Activated B cell treated with CpG ODN at 0.5 μM for 24 hours (primary cell): ENCODE measurements at regions of chr1 and their contacts with region 1.

Region 1: DNA sequence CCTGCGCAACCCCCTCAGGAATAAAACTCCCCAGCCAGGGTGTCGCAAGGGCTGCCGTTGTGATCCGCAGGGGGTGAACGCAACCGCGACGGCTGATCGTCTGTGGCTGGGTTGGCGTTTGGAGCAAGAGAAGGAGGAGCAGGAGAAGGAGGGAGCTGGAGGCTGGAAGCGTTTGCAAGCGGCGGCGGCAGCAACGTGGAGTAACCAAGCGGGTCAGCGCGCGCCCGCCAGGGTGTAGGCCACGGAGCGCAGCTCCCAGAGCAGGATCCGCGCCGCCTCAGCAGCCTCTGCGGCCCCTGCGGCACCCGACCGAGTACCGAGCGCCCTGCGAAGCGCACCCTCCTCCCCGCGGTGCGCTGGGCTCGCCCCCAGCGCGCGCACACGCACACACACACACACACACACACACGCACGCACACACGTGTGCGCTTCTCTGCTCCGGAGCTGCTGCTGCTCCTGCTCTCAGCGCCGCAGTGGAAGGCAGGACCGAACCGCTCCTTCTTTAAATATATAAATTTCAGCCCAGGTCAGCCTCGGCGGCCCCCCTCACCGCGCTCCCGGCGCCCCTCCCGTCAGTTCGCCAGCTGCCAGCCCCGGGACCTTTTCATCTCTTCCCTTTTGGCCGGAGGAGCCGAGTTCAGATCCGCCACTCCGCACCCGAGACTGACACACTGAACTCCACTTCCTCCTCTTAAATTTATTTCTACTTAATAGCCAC is 696 bp downstream of the TGFB2 start:
- DNase-seq: peak; percentile 50
- ATAC-seq: peak; percentile 76
- H3K4me3 Mint-ChIP-seq: no peak overlapping the region
- H3K27ac Mint-ChIP-seq: no peak overlapping the region
- H3K4me1 Mint-ChIP-seq: peaks cover 46% of the 10 kb centered on the region
- H3K27me3 Mint-ChIP-seq: no peaks in the 10 kb centered on the region
- CTCF ChIP-seq: no peak

Region 2: DNA sequence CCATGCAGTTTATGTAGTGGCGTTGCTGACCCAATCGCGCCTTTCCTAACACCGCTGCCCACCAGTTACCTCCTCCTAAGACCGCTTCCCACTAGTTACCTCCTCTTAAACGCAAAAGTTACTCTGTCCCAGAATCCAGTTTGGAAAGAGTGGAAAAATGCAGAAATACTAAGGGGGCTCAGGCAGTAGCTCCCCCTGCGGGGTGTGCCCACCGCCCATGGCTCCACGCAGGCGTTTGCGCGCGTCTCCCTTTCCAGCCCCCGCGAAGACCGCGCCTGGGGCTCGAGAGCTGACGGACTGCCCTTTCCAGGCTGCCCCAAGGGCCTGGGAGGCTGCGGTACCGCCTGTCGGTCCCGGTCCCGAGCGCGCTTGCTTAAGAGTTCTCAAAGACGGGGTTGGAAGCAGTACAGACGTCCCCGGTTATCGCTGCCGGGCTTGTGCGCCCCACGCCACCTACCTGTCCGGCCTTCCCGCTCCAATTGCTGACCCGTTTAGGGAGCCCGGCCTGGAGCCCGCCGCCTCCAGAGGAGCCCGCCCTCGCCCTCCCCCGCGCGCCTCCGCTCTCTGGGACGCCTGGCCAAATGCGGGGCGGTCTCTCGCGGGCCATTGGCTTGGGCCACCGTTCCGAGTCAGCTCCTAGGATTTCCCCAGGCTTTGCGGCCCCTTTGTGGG is 1208.5 kb before region 1 on chr1:
- CTCF ChIA-PET with region 1: no interaction called
- POLR2A ChIA-PET with region 1: no interaction called
- intact Hi-C with region 1: no loop called
- DNase-seq: no peak
- ATAC-seq: no peak
- H3K4me3 Mint-ChIP-seq: no peak overlapping the region
- H3K27ac Mint-ChIP-seq: no peak overlapping the region
- H3K4me1 Mint-ChIP-seq: peaks cover 2% of the 10 kb centered on the region
- H3K27me3 Mint-ChIP-seq: peaks cover 59% of the 10 kb centered on the region
- CTCF ChIP-seq: no peak

Region 3: GRCh38 chr1:218284934-218285635 is 60.7 kb before region 1 on chr1 and contains the start of gene RRP15:
- CTCF ChIA-PET with region 1: no interaction called
- POLR2A ChIA-PET with region 1: interaction called, 5 read pairs
- intact Hi-C with region 1: loop called (anchors 2 kb)
- DNase-seq: peak; percentile 85
- ATAC-seq: peak; percentile 99
- H3K4me3 Mint-ChIP-seq: peak within 1 kb of the TSS; percentile 96
- H3K27ac Mint-ChIP-seq: peak within 1 kb of the TSS; percentile 97
- H3K4me1 Mint-ChIP-seq: peaks cover 30% of the 10 kb centered on the region
- H3K27me3 Mint-ChIP-seq: peaks cover 9% of the 10 kb centered on the region
- CTCF ChIP-seq: no peak
- total RNA-seq, gene RRP15: 26.9 and 27.3 TPM in 2 replicates

Region 4: DNA sequence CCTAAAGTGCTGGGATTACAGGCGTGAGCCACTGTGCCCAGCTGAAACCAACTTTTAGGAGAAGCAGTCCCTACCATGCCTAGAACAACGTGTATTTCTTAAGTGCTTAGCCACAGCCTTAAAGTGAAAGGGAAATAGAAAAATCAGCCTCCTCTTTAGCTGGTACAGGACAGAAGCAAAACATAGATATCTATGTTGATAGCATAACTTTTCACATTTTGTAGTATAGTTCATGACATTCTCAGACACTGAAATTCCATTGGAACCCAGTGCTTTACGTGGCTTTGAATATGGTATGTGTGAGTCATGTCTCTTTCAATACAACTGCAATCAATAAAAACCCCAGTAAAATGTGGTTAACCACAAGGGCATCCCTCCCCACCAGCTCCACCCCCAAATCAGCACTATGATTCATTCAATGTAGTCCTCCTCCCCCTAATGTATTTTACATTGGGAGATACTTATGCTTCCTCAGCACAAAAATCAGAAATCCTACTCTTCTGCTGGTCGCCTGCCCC is 31.4 kb after region 1 on chr1:
- CTCF ChIA-PET with region 1: no interaction called
- POLR2A ChIA-PET with region 1: no interaction called
- intact Hi-C with region 1: loop called (anchors 1 kb)
- DNase-seq: peak; percentile 22
- ATAC-seq: peak; percentile 91
- H3K4me3 Mint-ChIP-seq: no peak overlapping the region
- H3K27ac Mint-ChIP-seq: no peak overlapping the region
- H3K4me1 Mint-ChIP-seq: peaks cover 19% of the 10 kb centered on the region
- H3K27me3 Mint-ChIP-seq: peaks cover 3% of the 10 kb centered on the region
- CTCF ChIP-seq: no peak

Region 5: DNA sequence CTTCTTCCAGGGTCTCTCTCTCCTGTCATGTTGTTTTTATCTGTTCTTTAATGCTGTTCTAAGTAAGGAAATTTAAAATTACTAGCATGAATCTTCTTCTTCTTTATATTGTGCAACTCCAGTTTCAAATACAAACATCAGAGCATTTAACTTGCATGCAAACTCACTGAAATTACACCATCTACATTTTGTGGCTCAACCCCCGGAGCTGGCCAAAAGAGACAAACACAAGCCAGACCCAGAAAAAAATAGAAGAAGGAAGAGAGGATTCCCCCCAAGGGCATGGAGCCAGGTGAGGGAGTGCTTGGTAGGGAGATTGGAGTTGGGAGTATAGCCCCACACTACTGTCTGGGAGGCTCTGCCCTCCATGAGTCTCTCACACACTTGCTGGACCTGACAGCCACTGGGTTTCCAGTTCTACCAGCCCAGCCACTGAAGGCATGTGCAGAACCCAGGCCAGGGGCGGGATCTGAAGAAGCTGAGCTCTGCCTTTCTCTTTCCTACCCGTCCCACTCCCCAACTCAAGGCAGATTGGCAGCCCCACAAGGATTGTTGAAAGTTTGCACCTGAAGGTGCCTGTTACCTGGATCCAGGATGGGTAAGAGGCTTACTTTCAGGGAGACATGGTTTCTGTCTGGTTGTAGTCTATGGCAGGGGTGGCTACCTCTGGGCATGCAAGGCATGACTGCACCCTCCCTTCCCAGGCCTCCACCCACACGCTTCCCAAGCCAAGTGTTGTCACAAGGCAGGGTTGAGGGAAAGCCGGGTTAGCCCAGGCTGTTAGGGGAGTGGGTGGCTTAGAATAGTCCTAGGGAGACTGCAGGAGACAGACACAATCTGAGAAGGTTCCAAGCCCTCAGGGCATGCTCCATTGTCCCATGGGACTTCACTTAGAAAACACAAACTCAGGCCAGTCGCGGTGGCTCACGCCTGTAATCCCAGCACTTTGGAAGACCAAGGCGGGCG is 296.5 kb after region 1 on chr1:
- CTCF ChIA-PET with region 1: no interaction called
- POLR2A ChIA-PET with region 1: no interaction called
- intact Hi-C with region 1: no loop called
- DNase-seq: no peak
- ATAC-seq: no peak
- H3K4me3 Mint-ChIP-seq: no peak overlapping the region
- H3K27ac Mint-ChIP-seq: no peak overlapping the region
- H3K4me1 Mint-ChIP-seq: no peaks in the 10 kb centered on the region
- H3K27me3 Mint-ChIP-seq: no peaks in the 10 kb centered on the region
- CTCF ChIP-seq: no peak

Region 6: DNA sequence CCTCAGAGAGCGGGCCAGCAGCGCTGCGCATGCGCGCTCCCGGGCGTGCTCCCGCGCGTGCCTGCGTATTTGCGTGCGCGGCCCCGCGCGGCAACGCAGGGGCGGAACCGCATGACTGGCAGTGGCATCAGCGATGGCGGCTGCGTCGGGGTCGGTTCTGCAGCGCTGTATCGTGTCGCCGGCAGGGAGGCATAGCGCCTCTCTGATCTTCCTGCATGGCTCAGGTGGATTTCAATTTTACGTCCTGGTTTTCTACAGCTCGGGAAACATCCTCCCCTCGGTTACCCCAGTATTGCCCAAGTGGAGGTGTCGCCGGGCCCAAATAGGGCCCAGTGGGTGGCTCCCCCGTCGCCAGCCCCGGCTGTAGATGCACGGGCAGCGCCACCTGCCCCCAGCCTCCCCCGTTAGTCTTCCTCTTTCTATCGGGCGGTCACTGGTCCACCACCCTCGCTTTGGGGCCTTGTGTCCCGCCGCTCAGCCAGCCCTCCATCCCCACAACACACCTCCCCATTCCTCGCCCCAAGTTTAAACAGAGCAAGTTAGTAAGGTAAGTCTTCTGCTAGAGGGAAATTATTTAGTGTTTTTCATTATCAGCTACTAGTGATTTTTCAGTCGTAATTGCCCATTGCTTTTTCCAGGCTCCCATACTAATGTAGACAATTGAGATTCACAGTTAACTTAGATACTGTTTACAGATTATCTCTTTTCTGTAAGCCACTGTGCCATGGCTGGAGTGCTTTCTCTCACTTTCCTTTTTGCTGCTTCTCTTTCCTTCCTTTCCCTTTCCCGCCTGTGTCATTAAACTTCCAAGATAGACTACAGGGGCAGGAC is 828.1 kb after region 1 on chr1 and contains the start of gene LYPLAL1:
- CTCF ChIA-PET with region 1: no interaction called
- POLR2A ChIA-PET with region 1: interaction called, 5 read pairs
- intact Hi-C with region 1: loop called (anchors 1 kb)
- DNase-seq: peak; percentile 91
- ATAC-seq: peak; percentile 86
- H3K4me3 Mint-ChIP-seq: peak within 1 kb of the TSS; percentile 98
- H3K27ac Mint-ChIP-seq: peak within 1 kb of the TSS; percentile 98
- H3K4me1 Mint-ChIP-seq: peaks cover 55% of the 10 kb centered on the region
- H3K27me3 Mint-ChIP-seq: no peaks in the 10 kb centered on the region
- CTCF ChIP-seq: no peak
- total RNA-seq, gene LYPLAL1: 38.0 and 42.3 TPM in 2 replicates